ENCODE measurements at regions of chr18 and their contacts with region 1.

Region 1: DNA sequence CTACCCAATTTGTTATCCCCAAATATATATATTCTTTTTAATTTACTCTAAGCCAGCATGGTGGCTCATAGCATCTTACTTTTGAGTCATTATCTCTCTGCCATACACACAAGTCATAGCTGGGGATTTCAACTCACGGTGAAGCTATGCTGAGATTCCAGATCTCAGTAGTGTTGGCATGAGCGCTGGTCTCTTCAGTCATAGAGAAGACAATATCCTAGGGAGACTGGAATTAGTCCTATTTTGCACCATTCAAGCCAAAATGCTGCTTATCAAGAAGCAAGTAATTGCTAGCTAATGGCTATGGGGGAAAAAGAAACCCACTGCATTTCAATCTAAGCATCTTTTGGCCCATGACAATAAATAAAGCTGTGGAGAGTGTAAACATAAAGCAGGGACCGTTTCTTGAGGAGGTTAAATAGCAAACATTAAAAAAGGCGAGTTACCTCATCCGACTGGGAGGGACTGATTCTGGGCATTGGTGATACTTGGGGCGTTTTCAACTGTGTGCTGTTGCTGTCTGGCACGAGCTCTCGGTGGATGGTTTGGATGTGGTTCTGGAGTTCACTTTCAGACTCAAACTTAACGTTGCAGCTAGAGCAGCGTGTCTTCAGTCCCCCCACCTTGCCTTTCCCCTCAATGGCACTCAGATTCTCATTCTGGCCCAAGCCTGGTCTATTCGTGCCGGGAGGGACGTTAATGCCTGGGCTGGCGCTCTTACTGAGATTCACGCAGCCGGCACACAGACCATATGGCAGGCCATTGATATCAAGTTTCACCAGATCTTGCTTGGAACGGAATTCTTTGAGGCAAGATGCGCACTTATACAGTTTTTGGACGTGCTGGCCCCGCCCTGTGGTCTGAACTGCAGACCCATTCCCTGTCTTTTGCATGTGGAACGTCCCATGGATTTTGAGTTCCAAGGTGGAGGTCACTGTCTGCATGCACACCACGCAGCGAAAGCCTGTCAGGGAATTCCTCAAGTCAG is 127.8 kb downstream of the ZNF521 start:
- DNase-seq: peak in 1 of 2 donors; percentile 16
- ATAC-seq: peak in 3 of 4 donors; percentile 39 to 87 (median 75)
- H3K4me3 ChIP-seq: peak overlapping the region; percentile 40
- H3K27ac ChIP-seq: peak overlapping the region; percentile 77
- H3K4me1 ChIP-seq: peaks cover 10% of the 10 kb centered on the region
- H3K27me3 ChIP-seq: no peaks in the 10 kb centered on the region
- CTCF ChIP-seq: no peak

Region 2: GRCh38 chr18:25192065-25192464 is 32.1 kb before region 1 on chr18:
- intact Hi-C with region 1: loop called in 1 of 2 experiments (anchors 1 kb)
- DNase-seq: no peak
- ATAC-seq: no peak
- H3K4me3 ChIP-seq: no peak overlapping the region
- H3K27ac ChIP-seq: no peak overlapping the region
- H3K4me1 ChIP-seq: no peaks in the 10 kb centered on the region
- H3K27me3 ChIP-seq: no peaks in the 10 kb centered on the region
- CTCF ChIP-seq: no peak